Caco-2 (cell line): ENCODE measurements at regions of chr13 and their contacts with region 1.

Region 1: GRCh38 chr13:97344265-97345175 is 89.4 kb upstream of the RAP2A start:
- DNase-seq: peak; percentile 65 to 69
- H3K4me3 ChIP-seq: no peak overlapping the region
- H3K4me3 Mint-ChIP-seq: no peak overlapping the region
- H3K27ac Mint-ChIP-seq: no peak overlapping the region
- H3K4me1 ChIP-seq: peaks cover 11% of the 10 kb centered on the region; the same call in 1 of the 2 replicates
- H3K4me1 Mint-ChIP-seq: peaks cover 8% of the 10 kb centered on the region
- H3K27me3 ChIP-seq: no peaks in the 10 kb centered on the region
- H3K27me3 Mint-ChIP-seq: no peaks in the 10 kb centered on the region
- CTCF ChIP-seq: peak; percentile 71 to 84

Region 2: DNA sequence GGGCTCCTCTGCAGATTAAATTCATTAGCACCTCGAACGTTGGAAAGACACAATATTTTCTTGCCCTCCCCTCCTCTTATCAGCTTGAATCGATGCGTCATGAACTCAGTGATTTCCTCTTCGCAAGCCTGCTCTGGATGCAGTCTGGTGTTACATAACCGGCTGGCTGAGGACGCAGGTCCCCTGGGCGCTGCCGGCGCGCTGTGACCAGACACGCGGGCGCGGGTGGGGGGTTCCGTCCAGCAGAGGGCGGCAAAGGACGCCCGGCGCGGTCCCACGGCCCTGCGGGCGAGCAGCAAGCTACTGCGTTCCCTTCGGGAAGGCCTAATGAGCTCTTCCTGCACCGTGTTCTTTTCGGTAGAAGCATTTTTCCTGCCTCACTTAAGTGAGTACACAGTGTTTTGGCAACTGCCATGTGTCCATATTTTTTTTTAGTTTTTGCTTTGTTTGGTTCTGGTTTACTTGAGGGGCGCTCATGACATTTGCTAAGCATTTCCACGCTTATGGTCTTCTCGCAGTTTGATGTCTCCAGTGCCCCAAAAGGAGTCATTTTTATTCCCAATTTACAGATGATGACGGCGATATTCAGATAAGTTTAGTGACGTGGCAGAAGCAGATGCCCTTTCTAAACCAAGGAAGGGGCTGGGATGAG is 234.6 kb before region 1 on chr13:
- CTCF ChIA-PET with region 1: interaction called, 24 read pairs
- POLR2A ChIA-PET with region 1: no interaction called
- intact Hi-C with region 1: loop called (anchors 1 kb)
- DNase-seq: peak; percentile 88 to 96
- H3K4me3 ChIP-seq: no peak overlapping the region
- H3K4me3 Mint-ChIP-seq: peak overlapping the region; percentile 52
- H3K27ac Mint-ChIP-seq: peak overlapping the region; percentile 36
- H3K4me1 ChIP-seq: peaks cover 30% of the 10 kb centered on the region
- H3K4me1 Mint-ChIP-seq: peaks cover 36% of the 10 kb centered on the region
- H3K27me3 ChIP-seq: no peaks in the 10 kb centered on the region
- H3K27me3 Mint-ChIP-seq: no peaks in the 10 kb centered on the region
- CTCF ChIP-seq: peak; percentile 91 to 93

Region 3: GRCh38 chr13:97221989-97222700 is 122.4 kb before region 1 on chr13 and contains the start of gene MBNL2:
- CTCF ChIA-PET with region 1: interaction called, 10 read pairs
- POLR2A ChIA-PET with region 1: interaction called, 3 read pairs
- intact Hi-C with region 1: loop called (anchors 1 kb)
- DNase-seq: peak; percentile 91 to 92
- H3K4me3 ChIP-seq: peak within 1 kb of the TSS; percentile 51
- H3K4me3 Mint-ChIP-seq: peak within 1 kb of the TSS; percentile 95
- H3K27ac Mint-ChIP-seq: peak within 1 kb of the TSS; percentile 89
- H3K4me1 ChIP-seq: peaks cover 43% of the 10 kb centered on the region
- H3K4me1 Mint-ChIP-seq: peaks cover 40% of the 10 kb centered on the region
- H3K27me3 ChIP-seq: no peaks in the 10 kb centered on the region
- H3K27me3 Mint-ChIP-seq: no peaks in the 10 kb centered on the region
- CTCF ChIP-seq: no peak
- total RNA-seq, gene MBNL2: 41.6 TPM in 2 replicates

Region 4: DNA sequence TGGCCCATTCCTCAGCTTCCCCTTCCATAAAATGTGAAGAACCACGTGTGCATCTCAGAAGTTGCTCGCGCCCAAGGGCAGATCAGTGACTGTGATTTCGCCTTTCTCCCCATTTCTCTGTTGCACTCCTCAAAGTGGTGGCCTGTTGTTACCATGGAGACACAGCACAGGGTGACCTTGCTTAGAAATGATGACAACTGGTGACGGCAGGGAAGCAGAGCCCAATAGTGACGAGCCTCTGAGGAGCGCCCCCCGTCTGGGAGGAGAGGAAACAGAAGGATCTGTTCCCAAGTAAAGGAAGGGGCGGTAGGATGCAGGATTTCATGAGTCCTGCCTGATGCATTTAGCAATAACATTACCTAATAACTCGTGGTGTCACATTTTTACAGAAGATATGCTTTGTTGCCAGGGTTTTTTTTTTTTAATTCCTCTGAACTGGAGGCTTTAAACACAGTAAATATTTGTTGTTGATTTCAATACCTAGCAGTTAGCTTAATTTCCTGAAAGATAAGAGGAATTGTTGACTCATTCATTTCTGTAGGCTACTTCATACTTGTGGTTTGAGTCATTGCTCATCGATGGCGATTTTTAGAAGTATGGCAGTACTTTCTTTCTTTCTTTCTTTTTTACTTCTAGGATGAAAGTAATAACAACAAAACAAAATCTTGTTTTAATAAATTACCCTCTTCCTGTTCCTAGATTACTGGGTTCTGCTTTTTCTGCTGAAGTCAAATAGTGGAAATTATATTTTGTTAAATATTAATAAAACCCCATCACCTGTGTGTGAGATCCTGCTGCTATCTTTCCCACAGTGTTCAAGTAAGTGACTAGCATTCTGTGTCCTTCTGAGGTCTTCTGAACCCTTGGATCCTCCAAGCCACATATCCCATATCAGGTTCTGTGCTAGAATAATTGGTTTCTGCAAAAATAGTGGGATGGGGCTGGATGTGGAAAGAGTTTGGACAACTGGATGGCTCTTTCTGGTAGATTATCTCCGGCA is 86.4 kb before region 1 on chr13:
- CTCF ChIA-PET with region 1: no interaction called
- POLR2A ChIA-PET with region 1: no interaction called
- intact Hi-C with region 1: loop called (anchors 1 kb)
- DNase-seq: peak; percentile 86 to 88
- H3K4me3 ChIP-seq: no peak overlapping the region
- H3K4me3 Mint-ChIP-seq: peak overlapping the region; percentile 62
- H3K27ac Mint-ChIP-seq: peak overlapping the region; percentile 98
- H3K4me1 ChIP-seq: peaks cover 76% of the 10 kb centered on the region
- H3K4me1 Mint-ChIP-seq: peaks cover 70% of the 10 kb centered on the region
- H3K27me3 ChIP-seq: no peaks in the 10 kb centered on the region
- H3K27me3 Mint-ChIP-seq: no peaks in the 10 kb centered on the region
- CTCF ChIP-seq: peak in 1 of 2 experiments; percentile 12

Region 5: DNA sequence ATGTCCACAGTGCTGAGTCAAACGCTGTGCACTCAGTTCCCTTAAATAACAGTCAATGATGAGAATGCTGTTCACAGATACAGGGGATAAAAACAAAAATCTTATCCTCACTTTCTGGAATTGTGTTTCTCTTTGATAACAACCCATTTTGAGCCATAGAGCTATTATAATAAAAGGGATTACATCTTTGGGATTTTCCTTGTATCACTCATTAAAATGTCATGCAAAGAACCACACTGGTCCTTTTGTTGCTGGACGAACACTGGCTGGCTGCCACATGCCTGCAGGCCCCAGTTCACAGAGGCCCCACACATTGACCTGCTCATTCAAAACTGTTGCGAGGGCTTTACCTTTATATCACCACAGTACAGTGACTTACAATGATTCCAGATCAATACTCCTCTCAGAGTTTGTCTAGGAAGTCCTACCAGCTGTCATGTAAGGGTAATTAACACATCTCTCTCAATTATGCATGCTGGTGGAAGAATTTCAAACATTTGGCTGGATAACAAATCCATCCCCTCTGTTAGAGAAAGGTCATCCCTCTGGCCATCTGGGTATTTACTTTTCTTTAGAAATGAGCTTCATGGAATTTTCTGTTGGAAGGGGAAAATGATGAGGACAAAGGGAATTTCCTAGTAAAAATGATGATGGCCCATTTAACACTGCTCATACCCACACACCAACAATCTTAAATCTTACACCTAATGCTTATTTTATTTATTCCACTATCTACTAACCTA is 36.5 kb before region 1 on chr13:
- CTCF ChIA-PET with region 1: no interaction called
- POLR2A ChIA-PET with region 1: no interaction called
- intact Hi-C with region 1: loop called (anchors 1 kb)
- DNase-seq: no peak
- H3K4me3 ChIP-seq: no peak overlapping the region
- H3K4me3 Mint-ChIP-seq: peak overlapping the region; percentile 13
- H3K27ac Mint-ChIP-seq: peak overlapping the region; percentile 84
- H3K4me1 ChIP-seq: peaks cover 50% of the 10 kb centered on the region
- H3K4me1 Mint-ChIP-seq: peaks cover 31% of the 10 kb centered on the region
- H3K27me3 ChIP-seq: no peaks in the 10 kb centered on the region
- H3K27me3 Mint-ChIP-seq: no peaks in the 10 kb centered on the region
- CTCF ChIP-seq: no peak